ENCODE measurements at regions of chr21 and their contacts with region 1.

Region 1: DNA sequence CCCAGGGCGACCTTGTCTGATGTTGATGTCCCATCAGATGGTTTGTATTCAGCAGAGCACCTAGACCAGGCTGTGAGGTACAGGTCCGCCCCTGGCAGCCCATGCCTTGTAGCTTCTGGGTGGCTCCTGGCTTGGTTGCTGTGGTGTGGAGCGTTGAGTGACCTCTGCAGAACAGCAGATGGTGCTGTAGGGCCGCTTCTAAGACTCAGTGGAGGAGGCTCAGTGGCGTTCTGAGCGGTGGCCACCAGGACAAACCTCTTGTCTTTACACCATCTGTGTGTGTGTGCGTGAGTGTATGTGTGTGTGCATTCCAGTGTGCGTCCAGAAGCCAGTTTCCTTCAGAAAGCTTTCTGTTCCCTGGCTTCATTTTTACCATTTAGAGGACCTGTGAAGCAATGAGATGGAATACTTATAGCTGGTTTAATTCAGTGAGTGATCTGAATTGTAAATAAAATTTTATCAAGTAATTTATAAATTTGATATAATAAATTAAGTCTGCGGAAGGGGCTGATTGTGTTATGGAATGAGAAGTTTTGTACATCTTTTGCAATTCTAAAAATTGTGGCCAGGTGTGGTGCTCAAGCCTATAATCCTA is 66.1 kb downstream of the ADARB1 start:
- DNase-seq: peak; percentile 95
- H3K4me3 ChIP-seq: no peak overlapping the region
- H3K27ac ChIP-seq: no peak overlapping the region
- H3K4me1 ChIP-seq: peaks cover 24% of the 10 kb centered on the region
- H3K27me3 ChIP-seq: no peaks in the 10 kb centered on the region

Region 2: DNA sequence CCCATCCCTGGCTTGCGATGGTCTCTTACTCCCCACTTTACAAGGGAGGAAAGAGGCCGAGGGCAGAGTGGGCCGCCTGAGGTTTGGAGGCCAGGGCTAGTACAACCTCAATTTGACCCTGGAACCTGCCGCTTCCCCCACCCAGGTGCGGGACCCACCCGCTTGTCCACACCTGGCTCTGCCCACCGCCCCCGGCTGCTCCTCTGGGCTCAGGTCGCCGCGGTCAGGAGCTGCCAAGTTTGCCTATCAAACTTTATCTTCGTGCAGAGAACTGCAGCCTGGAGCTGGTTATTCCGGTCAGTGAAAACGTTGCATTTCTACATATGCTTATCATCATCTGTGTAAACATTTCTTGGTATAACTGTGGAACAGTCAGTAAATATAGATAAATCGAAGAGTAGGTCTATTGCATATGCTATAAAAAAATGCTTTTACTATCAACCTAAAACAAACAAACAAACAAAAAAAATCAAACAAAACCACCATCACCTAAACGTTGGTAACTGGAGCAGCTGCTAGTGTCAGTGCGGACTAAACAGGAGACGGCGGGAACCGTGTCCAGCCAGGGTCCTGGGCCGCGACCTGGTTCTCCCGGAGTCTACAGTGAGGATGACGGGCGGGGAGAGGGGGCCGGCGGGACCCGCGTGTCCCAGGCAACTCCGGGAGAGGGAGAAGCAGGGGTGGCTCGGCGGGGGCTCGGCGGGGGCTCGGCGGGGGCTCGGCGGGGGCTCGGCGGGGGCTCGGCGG is 67.0 kb before region 1 on chr21:
- in situ Hi-C with region 1: no loop called
- DNase-seq: no peak
- H3K4me3 ChIP-seq: peak overlapping the region; percentile 93
- H3K27ac ChIP-seq: no peak overlapping the region
- H3K4me1 ChIP-seq: peaks cover 14% of the 10 kb centered on the region
- H3K27me3 ChIP-seq: no peaks in the 10 kb centered on the region

Region 3: DNA sequence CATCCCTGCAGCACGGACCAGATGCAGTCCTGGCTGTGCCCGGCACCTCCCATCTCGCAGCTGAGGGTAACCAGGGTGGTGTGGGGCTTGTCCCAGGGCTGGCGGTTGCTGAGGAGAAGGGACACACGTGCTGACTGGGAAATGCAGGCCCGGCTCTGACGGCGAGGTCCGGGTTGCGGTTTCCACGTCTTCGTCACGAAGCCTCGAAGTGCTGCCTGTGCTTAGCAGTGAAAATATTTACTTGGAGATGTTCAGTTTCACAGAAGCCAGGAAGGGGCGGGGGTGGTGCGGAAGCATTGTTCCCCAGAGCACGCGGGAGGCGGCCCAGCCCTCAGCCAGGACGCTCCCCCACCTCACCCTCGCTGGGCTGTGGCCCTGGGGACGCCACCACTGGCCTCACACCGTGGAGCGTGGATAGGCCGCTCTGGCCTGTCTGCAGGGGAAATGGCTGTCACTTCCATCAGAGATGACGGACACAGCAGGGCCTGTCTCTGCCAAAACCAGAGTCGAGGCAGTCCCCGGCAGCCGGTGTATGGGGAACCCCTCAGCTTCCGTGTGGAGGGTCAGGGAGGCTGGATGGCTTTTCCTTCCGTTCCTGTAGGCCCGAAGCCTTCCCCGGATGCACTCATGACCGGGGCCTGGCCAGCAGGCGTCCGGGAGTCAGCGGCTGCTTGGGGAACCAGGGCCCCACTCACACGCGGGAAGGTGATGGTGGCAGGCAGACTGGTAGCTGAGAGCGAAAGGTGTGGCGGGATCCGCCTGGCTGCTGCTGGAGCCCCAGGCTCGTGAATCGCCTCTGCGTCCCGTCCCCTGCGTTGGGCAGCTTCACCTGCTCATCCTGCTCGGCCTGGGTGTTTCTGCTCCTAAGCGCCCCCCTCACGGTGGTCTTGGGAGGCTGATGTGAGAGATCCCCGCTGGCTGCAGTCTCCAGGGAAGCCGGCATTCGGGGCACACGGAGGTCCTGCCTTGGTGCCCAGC is 161.9 kb after region 1 on chr21:
- in situ Hi-C with region 1: no loop called
- DNase-seq: no peak
- H3K4me3 ChIP-seq: no peak overlapping the region
- H3K27ac ChIP-seq: no peak overlapping the region
- H3K4me1 ChIP-seq: no peaks in the 10 kb centered on the region
- H3K27me3 ChIP-seq: no peaks in the 10 kb centered on the region

Region 4: DNA sequence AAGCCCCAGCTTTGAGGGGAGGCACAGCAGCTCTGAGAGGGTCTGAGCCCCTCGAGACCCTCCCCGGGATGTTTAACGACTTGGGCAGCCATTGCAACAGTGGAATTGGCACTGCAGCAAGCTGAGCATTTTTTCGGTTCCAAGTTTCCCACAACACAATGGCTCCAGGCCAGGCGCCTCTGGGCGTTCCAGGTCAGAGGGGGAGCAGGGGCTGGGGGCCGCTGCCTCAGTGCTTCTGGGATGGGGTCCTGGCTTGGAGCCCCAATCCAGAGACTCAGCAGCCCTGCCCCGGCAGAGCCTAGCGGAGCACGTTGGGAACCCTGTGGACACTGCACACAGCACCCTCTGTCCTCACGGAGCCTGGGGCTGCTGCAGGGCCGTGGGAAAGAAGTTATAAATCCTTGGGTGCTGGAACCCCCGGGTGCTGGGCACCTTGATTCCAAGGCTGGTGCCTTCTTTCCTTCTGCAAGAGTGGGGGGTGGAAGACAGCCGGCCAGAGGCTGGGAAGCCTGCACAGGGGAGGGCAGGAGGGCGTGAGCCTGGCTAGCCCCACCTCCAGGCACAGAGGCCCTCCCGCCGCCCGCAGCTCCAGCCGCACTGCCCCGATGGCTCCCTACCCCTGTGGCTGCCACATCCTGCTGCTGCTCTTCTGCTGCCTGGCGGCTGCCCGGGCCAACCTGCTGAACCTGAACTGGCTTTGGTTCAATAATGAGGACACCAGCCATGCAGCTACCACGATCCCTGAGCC is 314.7 kb after region 1 on chr21:
- in situ Hi-C with region 1: loop called (anchors 10 kb)
- DNase-seq: peak; percentile 69
- H3K4me3 ChIP-seq: peak overlapping the region; percentile 29; the same call in 1 of the 2 replicates
- H3K27ac ChIP-seq: no peak overlapping the region
- H3K4me1 ChIP-seq: peaks cover 18% of the 10 kb centered on the region
- H3K27me3 ChIP-seq: no peaks in the 10 kb centered on the region

Measured in GM23248 (cell line).